Esophagus muscularis mucosa (tissue), 4 donors: ENCODE measurements at regions of chr16 and their contacts with region 1.

Region 1: GRCh38 chr16:25051406-25052150 is 36.4 kb upstream of the ARHGAP17 start:
- DNase-seq: no peak
- H3K4me3 ChIP-seq: peak overlapping the region in 1 of 4 donors; percentile 11
- H3K27ac ChIP-seq: peak overlapping the region; percentile 45 to 64 (median 47)
- H3K4me1 ChIP-seq: peaks cover 14 to 38% (median 30%) of the 10 kb centered on the region in 4 donors
- H3K27me3 ChIP-seq: no peaks in the 10 kb centered on the region
- CTCF ChIP-seq: no peak
- EP300 ChIP-seq: no peak
- POLR2A ChIP-seq: no peak

Region 2: GRCh38 chr16:24939234-24939633 is 112.3 kb before region 1 on chr16:
- intact Hi-C with region 1: no loop called
- DNase-seq: no peak
- H3K4me3 ChIP-seq: no peak overlapping the region
- H3K27ac ChIP-seq: no peak overlapping the region
- H3K4me1 ChIP-seq: no peaks in the 10 kb centered on the region
- H3K27me3 ChIP-seq: no peaks in the 10 kb centered on the region
- CTCF ChIP-seq: no peak
- EP300 ChIP-seq: no peak
- POLR2A ChIP-seq: no peak

Region 3: GRCh38 chr16:25224731-25225319 is 173.2 kb after region 1 on chr16:
- intact Hi-C with region 1: loop called (anchors 5 kb)
- DNase-seq: no peak
- H3K4me3 ChIP-seq: no peak overlapping the region
- H3K27ac ChIP-seq: no peak overlapping the region
- H3K4me1 ChIP-seq: peaks cover 0 to 5% (median 5%) of the 10 kb centered on the region in 4 donors
- H3K27me3 ChIP-seq: no peaks in the 10 kb centered on the region
- CTCF ChIP-seq: no peak
- EP300 ChIP-seq: no peak
- POLR2A ChIP-seq: no peak